Mammary epithelial cell (primary cell): ENCODE measurements at regions of chr1 and their contacts with region 1.

Region 1: GRCh38 chr1:214213136-214213535 is 67.8 kb upstream of the SMYD2 start:
- DNase-seq: peak; percentile 95
- H3K4me3 ChIP-seq: no peak overlapping the region
- H3K27ac ChIP-seq: peak overlapping the region; percentile 60
- H3K4me1 ChIP-seq: peaks cover 52% of the 10 kb centered on the region
- H3K27me3 ChIP-seq: no peaks in the 10 kb centered on the region
- CTCF ChIP-seq: peak in 1 of 2 donors; percentile 31

Region 2: DNA sequence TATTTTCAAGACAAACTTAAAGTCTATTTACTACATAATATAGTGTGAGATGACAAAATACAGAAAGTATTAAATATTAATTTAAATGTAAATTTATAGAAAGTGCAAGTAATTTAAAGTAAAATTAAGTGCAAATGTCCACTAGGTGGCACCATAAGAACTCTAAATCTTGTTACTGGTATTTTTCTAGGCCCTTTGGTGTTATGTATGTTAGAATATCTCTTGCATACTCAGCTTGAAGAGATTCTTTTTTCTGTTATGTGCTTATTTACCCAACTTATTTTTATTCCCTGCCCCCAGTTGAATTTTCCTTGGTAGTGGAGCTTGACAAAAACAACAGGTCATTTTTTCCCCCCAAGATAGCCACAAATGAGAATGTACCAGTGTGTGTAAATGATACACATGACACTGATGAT is 1090.6 kb before region 1 on chr1:
- CTCF ChIA-PET with region 1: no interaction called
- dilution Hi-C with region 1: no loop called
- in situ Hi-C with region 1: no loop called
- intact Hi-C with region 1: loop called (anchors 5 kb)
- DNase-seq: peak; percentile 24
- H3K4me3 ChIP-seq: no peak overlapping the region
- H3K27ac ChIP-seq: no peak overlapping the region
- H3K4me1 ChIP-seq: peaks cover 21% of the 10 kb centered on the region
- H3K27me3 ChIP-seq: no peaks in the 10 kb centered on the region
- CTCF ChIP-seq: peak; percentile 32 to 43

Region 3: GRCh38 chr1:213987927-213988506 is 225.1 kb before region 1 on chr1 and contains the start of gene PROX1:
- CTCF ChIA-PET with region 1: no interaction called
- dilution Hi-C with region 1: no loop called
- in situ Hi-C with region 1: no loop called
- intact Hi-C with region 1: loop called (anchors 5 kb)
- DNase-seq: peak; percentile 68
- H3K4me3 ChIP-seq: peak within 1 kb of the TSS; percentile 49 to 61 (median 51)
- H3K27ac ChIP-seq: no peak within 1 kb of the TSS
- H3K4me1 ChIP-seq: peaks cover 9% of the 10 kb centered on the region
- H3K27me3 ChIP-seq: peaks cover 60% of the 10 kb centered on the region
- CTCF ChIP-seq: peak in 1 of 2 donors; percentile 6
- total RNA-seq, gene PROX1: 0.33 to 0.35 TPM

Region 4: GRCh38 chr1:214281021-214281719 is 68.0 kb after region 1 on chr1 and contains the start of gene SMYD2:
- CTCF ChIA-PET with region 1: no interaction called
- dilution Hi-C with region 1: no loop called
- in situ Hi-C with region 1: no loop called
- intact Hi-C with region 1: loop called (anchors 1 kb)
- DNase-seq: peak; percentile 84
- H3K4me3 ChIP-seq: peak within 1 kb of the TSS; percentile 53 to 74 (median 72)
- H3K27ac ChIP-seq: peak within 1 kb of the TSS; percentile 93
- H3K4me1 ChIP-seq: peaks cover 17% of the 10 kb centered on the region
- H3K27me3 ChIP-seq: no peaks in the 10 kb centered on the region
- CTCF ChIP-seq: no peak
- total RNA-seq, gene SMYD2: 41.3 to 42.1 TPM

Region 5: GRCh38 chr1:214427871-214428277 is 214.7 kb after region 1 on chr1:
- CTCF ChIA-PET with region 1: no interaction called
- dilution Hi-C with region 1: no loop called
- in situ Hi-C with region 1: no loop called
- intact Hi-C with region 1: no loop called
- DNase-seq: peak; percentile 99
- H3K4me3 ChIP-seq: no peak overlapping the region
- H3K27ac ChIP-seq: peak overlapping the region; percentile 92
- H3K4me1 ChIP-seq: peaks cover 52% of the 10 kb centered on the region
- H3K27me3 ChIP-seq: no peaks in the 10 kb centered on the region
- CTCF ChIP-seq: no peak

Region 6: DNA sequence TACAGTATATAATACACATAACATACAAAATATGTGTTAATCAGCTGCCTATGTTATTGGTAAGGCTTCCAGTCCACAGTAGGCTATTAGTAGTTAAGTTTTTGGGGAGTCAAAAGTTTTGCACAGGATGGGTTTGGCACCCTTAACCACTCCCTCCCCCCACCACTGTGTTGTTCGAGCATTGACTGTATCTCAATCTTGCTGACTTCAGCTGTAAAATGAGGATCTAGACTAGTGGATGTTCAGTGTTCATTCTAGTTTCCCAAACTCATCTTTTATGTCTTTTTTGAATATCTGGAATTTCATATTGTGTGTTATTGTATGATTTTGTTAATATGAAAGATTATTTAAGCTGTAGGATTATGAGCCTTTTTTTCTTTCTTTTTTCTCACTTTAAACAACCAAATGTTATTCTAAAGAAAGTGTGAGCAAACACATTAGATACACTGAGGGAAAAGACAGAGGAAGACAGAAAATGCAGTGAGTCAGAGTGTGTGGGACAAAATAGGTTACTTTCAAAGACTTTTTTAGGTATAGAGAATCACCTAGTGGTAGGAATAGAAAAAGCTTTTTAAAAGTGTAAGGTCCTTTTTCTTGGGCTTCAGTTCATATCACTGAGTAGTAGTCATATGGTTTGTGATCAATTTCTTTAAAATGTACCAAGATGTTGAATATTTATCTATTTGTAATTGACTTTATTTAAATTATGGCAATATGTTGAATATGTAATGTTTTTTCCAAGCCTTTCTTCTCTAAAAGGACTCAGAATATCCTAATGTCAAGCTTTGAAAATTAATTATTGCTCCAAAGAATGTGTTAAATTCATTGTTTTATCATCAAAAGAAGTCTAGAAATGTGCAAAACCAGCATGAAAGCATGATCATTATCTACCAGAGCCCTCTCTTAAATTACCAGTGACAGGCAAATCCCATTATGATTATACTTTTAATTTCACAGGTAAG is 371.9 kb after region 1 on chr1:
- CTCF ChIA-PET with region 1: interaction called, 5 read pairs
- dilution Hi-C with region 1: no loop called
- in situ Hi-C with region 1: no loop called
- intact Hi-C with region 1: loop called (anchors 1 kb)
- DNase-seq: peak; percentile 64
- H3K4me3 ChIP-seq: no peak overlapping the region
- H3K27ac ChIP-seq: peak overlapping the region; percentile 54
- H3K4me1 ChIP-seq: peaks cover 39% of the 10 kb centered on the region
- H3K27me3 ChIP-seq: no peaks in the 10 kb centered on the region
- CTCF ChIP-seq: peak; percentile 79 to 98

Region 7: DNA sequence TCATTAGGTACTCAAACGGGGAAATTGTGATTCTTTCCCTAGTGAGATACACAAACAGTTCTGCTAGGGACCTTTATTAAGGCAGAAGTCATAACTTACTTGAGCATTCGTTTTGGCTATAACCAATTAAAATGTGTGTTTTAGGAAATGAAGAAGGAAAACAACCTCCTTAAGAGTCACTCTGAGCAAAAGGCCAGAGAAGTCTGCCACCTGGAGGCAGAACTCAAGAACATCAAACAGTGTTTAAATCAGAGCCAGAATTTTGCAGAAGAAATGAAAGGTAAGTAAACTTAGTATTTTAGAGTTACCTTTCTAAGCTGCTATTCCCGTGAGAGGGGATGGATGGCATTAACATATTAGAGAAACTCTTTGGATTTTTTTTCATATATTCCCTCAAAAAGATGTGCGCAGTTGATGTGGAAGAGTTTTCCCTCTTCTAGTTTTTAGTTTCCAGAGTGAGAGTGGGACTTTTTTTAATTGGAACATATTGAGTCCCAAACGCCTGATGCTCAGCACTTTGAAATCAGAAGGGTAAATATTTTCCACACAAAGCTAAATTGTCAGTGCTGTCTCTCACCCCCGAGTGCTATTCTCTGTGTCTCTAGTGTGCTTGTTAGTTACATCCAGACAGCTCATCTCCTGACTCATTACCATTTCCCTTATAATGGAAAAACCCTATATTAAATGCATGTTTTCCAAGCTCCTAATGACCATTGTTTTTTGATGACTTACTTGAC is 424.8 kb after region 1 on chr1:
- CTCF ChIA-PET with region 1: no interaction called
- dilution Hi-C with region 1: no loop called
- in situ Hi-C with region 1: no loop called
- intact Hi-C with region 1: loop called (anchors 1 kb)
- DNase-seq: peak; percentile 46
- H3K4me3 ChIP-seq: no peak overlapping the region
- H3K27ac ChIP-seq: no peak overlapping the region
- H3K4me1 ChIP-seq: peaks cover 5% of the 10 kb centered on the region
- H3K27me3 ChIP-seq: no peaks in the 10 kb centered on the region
- CTCF ChIP-seq: peak; percentile 61 to 81